Naive thymus-derived CD4-positive, alpha-beta T cell (primary cell): ENCODE measurements at regions of chr11 and their contacts with region 1.

Region 1: GRCh38 chr11:59283825-59284772 is 71.4 kb upstream of the MPEG1 start:
- DNase-seq: peak; percentile 21 to 68 (median 57)
- ATAC-seq: peak; percentile 90
- H3K4me3 ChIP-seq: peak overlapping the region; percentile 46
- H3K4me3 Mint-ChIP-seq: peak overlapping the region; percentile 67 to 88 (median 82)
- H3K27ac ChIP-seq: no peak overlapping the region
- H3K27ac Mint-ChIP-seq: peak overlapping the region in 6 of 9 donors; percentile 3 to 92 (median 24)
- H3K4me1 ChIP-seq: peaks cover 0 to 9% of the 10 kb centered on the region in 2 donors
- H3K4me1 Mint-ChIP-seq: peaks cover 11 to 19% (median 18%) of the 10 kb centered on the region in 7 donors
- H3K27me3 ChIP-seq: no peaks in the 10 kb centered on the region
- H3K27me3 Mint-ChIP-seq: peaks cover 5 to 18% (median 12%) of the 10 kb centered on the region in 5 donors

Region 2: DNA sequence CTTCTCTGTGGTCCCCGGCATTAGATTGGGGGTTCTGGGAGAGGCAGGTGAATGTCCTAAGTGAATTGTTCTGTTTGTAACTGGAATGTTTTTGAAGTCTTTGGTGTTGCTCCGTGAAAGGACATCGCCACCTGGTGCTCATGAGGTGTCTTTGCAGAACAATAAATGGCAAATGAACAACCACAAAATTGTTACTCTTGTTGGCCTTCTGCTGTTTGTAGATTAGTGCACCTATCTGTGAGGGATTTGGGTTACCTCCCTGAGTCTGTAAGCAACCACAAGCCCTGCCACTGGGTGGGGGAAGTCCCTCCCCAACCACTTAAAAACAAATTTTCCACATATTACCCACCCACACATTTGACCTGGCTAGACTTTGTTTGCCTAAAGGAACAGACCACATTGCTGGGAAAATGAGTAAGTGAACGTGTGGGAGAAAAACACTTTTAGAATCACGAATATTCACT is 76.1 kb before region 1 on chr11:
- CTCF ChIA-PET with region 1: no interaction called
- POLR2A ChIA-PET with region 1: no interaction called
- intact Hi-C with region 1: loop called in 1 of 2 experiments (anchors 1 kb)
- DNase-seq: peak in 8 of 9 donors; percentile 20 to 52 (median 40)
- ATAC-seq: peak; percentile 72
- H3K4me3 ChIP-seq: no peak overlapping the region
- H3K4me3 Mint-ChIP-seq: peak overlapping the region; percentile 18 to 67 (median 50)
- H3K27ac ChIP-seq: no peak overlapping the region
- H3K27ac Mint-ChIP-seq: peak overlapping the region in 8 of 9 donors; percentile 38 to 75 (median 67)
- H3K4me1 ChIP-seq: peaks cover 4 to 19% of the 10 kb centered on the region in 2 donors
- H3K4me1 Mint-ChIP-seq: peaks cover 13 to 29% (median 20%) of the 10 kb centered on the region in 7 donors
- H3K27me3 ChIP-seq: no peaks in the 10 kb centered on the region
- H3K27me3 Mint-ChIP-seq: peaks cover 0 to 19% (median 0%) of the 10 kb centered on the region in 5 donors

Region 3: GRCh38 chr11:59263225-59263894 is 20.7 kb before region 1 on chr11:
- CTCF ChIA-PET with region 1: interaction called, 4 read pairs
- POLR2A ChIA-PET with region 1: no interaction called
- intact Hi-C with region 1: loop called in 1 of 2 experiments (anchors 1 kb)
- DNase-seq: peak in 5 of 9 donors; percentile 19 to 38 (median 32)
- ATAC-seq: peak; percentile 66
- H3K4me3 ChIP-seq: no peak overlapping the region
- H3K4me3 Mint-ChIP-seq: no peak overlapping the region
- H3K27ac ChIP-seq: no peak overlapping the region
- H3K27ac Mint-ChIP-seq: no peak overlapping the region
- H3K4me1 ChIP-seq: no peaks in the 10 kb centered on the region
- H3K4me1 Mint-ChIP-seq: no peaks in the 10 kb centered on the region
- H3K27me3 ChIP-seq: no peaks in the 10 kb centered on the region
- H3K27me3 Mint-ChIP-seq: no peaks in the 10 kb centered on the region